BJ (cell line): ENCODE measurements at regions of chr1 and their contacts with region 1.

Region 1: DNA sequence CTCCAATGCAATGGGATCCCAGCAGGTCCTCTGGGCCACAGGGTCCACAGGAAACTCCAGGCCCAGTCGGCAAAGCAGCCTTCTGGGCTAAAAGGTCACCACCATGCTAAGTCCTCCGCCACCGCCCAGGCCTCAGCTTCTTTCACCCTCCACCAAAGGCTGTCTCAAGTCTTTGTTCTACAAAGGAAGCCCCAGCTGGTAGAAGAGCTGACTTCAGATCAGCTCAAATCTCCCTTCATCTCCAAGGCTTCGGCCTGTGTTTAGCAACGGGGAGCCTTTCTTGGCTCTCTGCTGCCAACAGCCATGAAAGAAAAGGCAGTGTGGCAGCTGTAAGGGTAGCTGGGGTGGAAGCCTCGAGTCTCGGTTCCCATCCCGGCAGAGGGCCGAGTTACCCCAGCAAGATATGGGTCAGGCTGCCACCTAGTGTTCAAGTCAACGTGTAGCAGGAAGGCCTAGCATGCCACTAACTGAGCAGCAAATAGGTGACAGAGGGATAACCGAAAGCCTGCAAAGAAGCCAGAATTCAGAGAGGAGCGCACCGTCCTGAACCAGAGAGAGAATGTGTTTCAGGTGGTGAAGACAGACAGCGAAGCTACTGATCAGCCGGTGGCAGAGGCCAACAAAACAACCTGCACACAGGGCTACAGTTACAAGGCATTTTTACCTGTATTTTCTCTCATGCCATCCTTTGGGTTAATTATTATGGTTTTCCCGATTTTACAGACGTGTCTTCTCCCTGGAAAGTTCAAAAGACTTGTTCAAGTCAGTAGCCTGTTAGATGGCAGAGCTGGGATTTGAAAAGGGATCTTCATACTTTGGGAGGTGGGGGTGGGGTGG is 26.8 kb upstream of the CRNN start:
- DNase-seq: no peak
- H3K4me3 ChIP-seq: no peak overlapping the region
- H3K27me3 ChIP-seq: no peaks in the 10 kb centered on the region; the same call in 1 of the 2 replicates
- CTCF ChIP-seq: peak; percentile 87

Region 2: DNA sequence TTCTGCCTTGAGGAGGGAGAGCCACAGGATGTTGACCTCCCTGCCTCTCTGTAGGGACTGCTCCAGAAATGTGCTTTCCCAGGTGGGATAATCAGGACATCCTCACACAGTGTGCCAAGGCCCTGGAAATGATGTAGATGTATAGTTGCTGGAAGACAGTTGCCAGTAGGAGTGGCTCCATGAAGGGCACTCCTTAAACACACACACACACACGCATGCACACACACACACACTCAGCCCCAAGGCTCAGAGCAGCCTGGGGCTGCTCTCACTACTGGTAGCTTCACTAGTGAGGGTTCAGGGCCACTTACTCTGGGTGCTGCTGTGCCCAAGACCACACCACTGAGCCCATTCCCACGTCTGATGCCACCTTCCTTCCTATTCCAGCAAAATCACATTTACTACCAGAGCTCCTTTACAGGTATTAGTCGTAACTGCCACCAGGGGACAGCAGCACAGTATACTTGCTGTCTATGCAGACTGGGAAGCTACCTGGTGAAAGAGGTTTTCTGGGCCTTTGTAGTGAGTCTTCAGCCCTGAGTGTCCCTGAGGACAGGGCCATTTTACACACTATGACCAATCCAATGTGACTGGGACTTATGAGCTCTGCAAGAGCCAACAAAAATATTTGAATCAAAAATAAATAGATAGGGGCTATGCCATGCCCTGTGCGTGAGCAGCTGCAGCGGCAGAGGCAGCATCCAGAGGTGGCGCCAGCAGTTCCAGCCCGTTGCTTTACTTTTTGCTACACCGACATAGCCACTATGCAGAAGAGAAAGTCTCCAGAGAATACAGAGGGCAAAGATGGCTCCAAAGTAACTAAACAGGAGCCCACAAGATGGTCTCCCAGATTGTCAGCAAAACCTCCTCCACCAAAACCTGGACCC is 41.8 kb before region 1 on chr1:
- CTCF ChIA-PET with region 1: interaction called, 29 read pairs
- POLR2A ChIA-PET with region 1: no interaction called
- DNase-seq: no peak
- H3K4me3 ChIP-seq: no peak overlapping the region
- H3K27me3 ChIP-seq: no peaks in the 10 kb centered on the region; the same call in 1 of the 2 replicates
- CTCF ChIP-seq: peak; percentile 42

Region 3: GRCh38 chr1:152426731-152427130 is 14.1 kb before region 1 on chr1:
- CTCF ChIA-PET with region 1: interaction called, 12 read pairs
- POLR2A ChIA-PET with region 1: no interaction called
- DNase-seq: no peak
- H3K4me3 ChIP-seq: no peak overlapping the region
- H3K27me3 ChIP-seq: no peaks in the 10 kb centered on the region
- CTCF ChIP-seq: no peak